ENCODE measurements at regions of chr14 and their contacts with region 1.

Region 1: GRCh38 chr14:103260620-103261124 is 73.4 kb upstream of the EIF5 start:
- DNase-seq: no peak
- ATAC-seq: peak; percentile 85
- H3K4me3 ChIP-seq: peak overlapping the region; percentile 68 to 75 (median 75)
- H3K27ac ChIP-seq: peak overlapping the region; percentile 40
- H3K4me1 ChIP-seq: peaks cover 36% of the 10 kb centered on the region
- H3K27me3 ChIP-seq: no peaks in the 10 kb centered on the region; a peak in 1 of 5 replicates
- CTCF ChIP-seq: no peak
- EP300 ChIP-seq: no peak
- POLR2A ChIP-seq: no peak
- RAD21 ChIP-seq: no peak

Region 2: GRCh38 chr14:103246070-103246469 is 14.6 kb before region 1 on chr14:
- CTCF ChIA-PET with region 1: no interaction called
- POLR2A ChIA-PET with region 1: interaction called, 20 read pairs
- in situ Hi-C with region 1: no loop called
- intact Hi-C with region 1: no loop called
- DNase-seq: peak; percentile 67
- ATAC-seq: peak; percentile 65
- H3K4me3 ChIP-seq: peak overlapping the region in 1 of 3 experiments; percentile 20; a peak in 1 of 6 replicates
- H3K27ac ChIP-seq: peak overlapping the region; percentile 88
- H3K4me1 ChIP-seq: peaks cover 52% of the 10 kb centered on the region
- H3K27me3 ChIP-seq: no peaks in the 10 kb centered on the region
- CTCF ChIP-seq: no peak
- EP300 ChIP-seq: 0 out of 4 replicates have a peak, but pooled peaks of 1 of the 2 experiments have one; percentile 16
- POLR2A ChIP-seq: no peak
- RAD21 ChIP-seq: no peak

Region 3: GRCh38 chr14:103346286-103346685 is 85.6 kb after region 1 on chr14:
- CTCF ChIA-PET with region 1: no interaction called
- POLR2A ChIA-PET with region 1: no interaction called
- in situ Hi-C with region 1: no loop called
- intact Hi-C with region 1: no loop called
- DNase-seq: no peak
- ATAC-seq: no peak
- H3K4me3 ChIP-seq: no peak overlapping the region
- H3K27ac ChIP-seq: no peak overlapping the region
- H3K4me1 ChIP-seq: peaks cover 38% of the 10 kb centered on the region
- H3K27me3 ChIP-seq: no peaks in the 10 kb centered on the region
- CTCF ChIP-seq: no peak
- EP300 ChIP-seq: no peak
- POLR2A ChIP-seq: peak in 1 of 2 experiments; percentile 11; a peak in 1 of 4 replicates
- RAD21 ChIP-seq: no peak

Region 4: GRCh38 chr14:103920981-103921854 is 660.5 kb after region 1 on chr14:
- CTCF ChIA-PET with region 1: no interaction called
- POLR2A ChIA-PET with region 1: no interaction called
- in situ Hi-C with region 1: no loop called
- intact Hi-C with region 1: no loop called
- DNase-seq: peak; percentile 83
- ATAC-seq: peak; percentile 97
- H3K4me3 ChIP-seq: peak overlapping the region; percentile 89 to 93 (median 92)
- H3K27ac ChIP-seq: peak overlapping the region; percentile 84
- H3K4me1 ChIP-seq: peaks cover 42% of the 10 kb centered on the region
- H3K27me3 ChIP-seq: no peaks in the 10 kb centered on the region; a peak in 1 of 5 replicates
- CTCF ChIP-seq: peak; percentile 99
- EP300 ChIP-seq: peak in 1 of 2 experiments; percentile 35; a peak in 1 of 4 replicates
- POLR2A ChIP-seq: peak; percentile 73 to 95
- RAD21 ChIP-seq: peak; percentile 78

Measured in HepG2 (cell line).